ENCODE measurements at regions of chr6 and their contacts with region 1.

Region 1: GRCh38 chr6:53725791-53726431 is 60.4 kb upstream of the KLHL31 start:
- DNase-seq: no peak
- ATAC-seq: peak; percentile 91
- H3K4me3 ChIP-seq: no peak overlapping the region
- H3K27ac ChIP-seq: no peak overlapping the region
- H3K4me1 ChIP-seq: peaks cover 12 to 18% of the 10 kb centered on the region in 2 experiments
- H3K27me3 ChIP-seq: no peaks in the 10 kb centered on the region
- CTCF ChIP-seq: peak; percentile 78 to 97 (median 94); a peak in 5 of 6 replicates
- POLR2A ChIP-seq: no peak
- RAD21 ChIP-seq: peak; percentile 86

Region 2: DNA sequence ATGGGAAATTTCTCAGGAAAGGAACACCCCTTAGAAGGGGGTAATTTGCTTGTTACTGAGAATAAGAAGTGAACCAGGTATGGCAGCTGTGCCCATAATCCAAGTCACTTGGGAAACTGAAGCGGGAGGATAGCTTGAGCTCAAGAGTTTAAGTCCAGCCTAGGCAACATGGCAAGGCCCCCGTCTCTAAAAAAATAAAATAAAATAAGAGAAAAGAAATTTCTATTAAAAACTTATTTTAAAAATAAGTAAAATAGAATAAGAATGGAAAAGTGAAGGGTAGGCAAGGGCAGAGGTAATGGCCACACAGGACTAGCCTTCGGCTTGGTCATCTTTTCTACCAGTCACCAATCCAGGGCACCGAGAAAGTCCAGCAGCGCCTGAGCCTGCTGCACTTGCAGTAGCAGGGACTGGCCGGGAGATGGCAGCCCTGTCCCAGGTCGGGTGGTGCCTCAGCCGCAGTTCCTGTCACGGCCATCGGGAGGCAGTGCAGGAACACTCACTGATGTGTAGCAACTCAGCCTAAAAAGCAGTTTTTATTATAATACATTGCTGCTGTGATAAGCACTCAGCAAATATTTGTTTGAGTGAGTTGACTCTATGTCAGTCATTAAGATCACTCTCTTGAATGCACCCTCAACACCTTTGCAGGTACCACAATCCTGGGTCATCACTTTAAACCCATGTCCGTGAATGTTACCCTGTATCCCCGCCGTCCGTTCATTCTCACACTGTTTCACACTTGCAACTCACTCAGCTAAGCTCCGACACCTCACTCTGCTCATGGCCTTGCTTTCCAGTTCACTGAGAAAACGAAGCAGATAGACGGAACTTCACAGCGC is 554.1 kb before region 1 on chr6:
- CTCF ChIA-PET with region 1: interaction called, 4 read pairs
- POLR2A ChIA-PET with region 1: no interaction called
- RAD21 ChIA-PET with region 1: no interaction called
- intact Hi-C with region 1: loop called (anchors 5 kb)
- DNase-seq: peak; percentile 58
- ATAC-seq: peak; percentile 91
- H3K4me3 ChIP-seq: no peak overlapping the region
- H3K27ac ChIP-seq: no peak overlapping the region
- H3K4me1 ChIP-seq: peaks cover 0 to 10% of the 10 kb centered on the region in 2 experiments; a peak in 1 of 4 replicates
- H3K27me3 ChIP-seq: no peaks in the 10 kb centered on the region
- CTCF ChIP-seq: peak; percentile 100
- POLR2A ChIP-seq: no peak
- RAD21 ChIP-seq: peak; percentile 100

Region 3: GRCh38 chr6:53544470-53545308 is 181.2 kb before region 1 on chr6 and contains the start of gene GCLC:
- CTCF ChIA-PET with region 1: interaction called, 5 read pairs
- POLR2A ChIA-PET with region 1: interaction called, 3 read pairs
- RAD21 ChIA-PET with region 1: no interaction called
- intact Hi-C with region 1: loop called (anchors 2 kb)
- DNase-seq: peak; percentile 93
- ATAC-seq: peak; percentile 69
- H3K4me3 ChIP-seq: peak within 1 kb of the TSS; percentile 71 to 91
- H3K27ac ChIP-seq: peak within 1 kb of the TSS; percentile 88
- H3K4me1 ChIP-seq: peaks cover 6 to 43% of the 10 kb centered on the region in 2 experiments; a peak in 3 of 4 replicates
- H3K27me3 ChIP-seq: no peaks in the 10 kb centered on the region
- CTCF ChIP-seq: peak; percentile 41 to 49 (median 41)
- POLR2A ChIP-seq: peak; percentile 80
- RAD21 ChIP-seq: peak; percentile 73
- total RNA-seq, gene GCLC: 72.0 TPM

Region 4: GRCh38 chr6:53651764-53652401 is 74.0 kb before region 1 on chr6:
- CTCF ChIA-PET with region 1: interaction called, 3 read pairs
- POLR2A ChIA-PET with region 1: interaction called, 3 read pairs
- RAD21 ChIA-PET with region 1: interaction called in 1 of 2 experiments, 3 read pairs
- intact Hi-C with region 1: loop called (anchors 1 kb)
- DNase-seq: peak; percentile 88
- ATAC-seq: peak; percentile 93
- H3K4me3 ChIP-seq: peak overlapping the region; percentile 50 to 58
- H3K27ac ChIP-seq: peak overlapping the region; percentile 89
- H3K4me1 ChIP-seq: peaks cover 4 to 31% of the 10 kb centered on the region in 2 experiments; a peak in 3 of 4 replicates
- H3K27me3 ChIP-seq: no peaks in the 10 kb centered on the region
- CTCF ChIP-seq: peak in 2 of 3 experiments; percentile 13 to 33; a peak in 2 of 6 replicates
- POLR2A ChIP-seq: peak; percentile 56
- RAD21 ChIP-seq: peak; percentile 48

Region 5: GRCh38 chr6:53794720-53795253 is 68.9 kb after region 1 on chr6 and contains the start of gene LRRC1:
- CTCF ChIA-PET with region 1: interaction called, 10 read pairs
- POLR2A ChIA-PET with region 1: interaction called, 4 read pairs
- RAD21 ChIA-PET with region 1: interaction called, 3 to 4 read pairs
- intact Hi-C with region 1: no loop called
- DNase-seq: peak; percentile 86
- ATAC-seq: peak; percentile 71
- H3K4me3 ChIP-seq: peak within 1 kb of the TSS; percentile 65 to 75
- H3K27ac ChIP-seq: peak within 1 kb of the TSS; percentile 92
- H3K4me1 ChIP-seq: peaks cover 19 to 40% of the 10 kb centered on the region in 2 experiments
- H3K27me3 ChIP-seq: no peaks in the 10 kb centered on the region
- CTCF ChIP-seq: no peak
- POLR2A ChIP-seq: peak; percentile 20
- RAD21 ChIP-seq: no peak
- total RNA-seq, gene LRRC1: 19.8 TPM

Region 6: DNA sequence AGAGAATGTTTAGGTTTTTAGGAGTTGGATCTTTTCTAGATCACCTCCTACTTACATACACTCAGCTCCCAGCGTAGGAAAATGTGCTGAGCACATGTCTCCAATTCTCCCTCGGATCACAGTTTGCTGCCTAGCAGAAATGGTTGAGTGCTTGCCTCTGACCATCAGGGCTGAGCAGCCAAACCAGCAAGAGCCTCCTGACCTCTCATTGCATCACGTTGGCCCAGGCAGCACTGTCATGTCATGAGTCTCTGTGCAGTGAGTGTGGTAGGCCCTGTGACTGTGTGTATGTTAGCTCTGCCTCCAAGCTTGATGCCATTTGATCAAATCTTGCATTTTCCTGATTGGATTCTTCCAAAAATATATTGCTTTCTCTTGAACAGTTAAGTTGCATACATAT is 180.9 kb after region 1 on chr6:
- CTCF ChIA-PET with region 1: no interaction called
- POLR2A ChIA-PET with region 1: no interaction called
- RAD21 ChIA-PET with region 1: no interaction called
- intact Hi-C with region 1: no loop called
- DNase-seq: no peak
- ATAC-seq: no peak
- H3K4me3 ChIP-seq: no peak overlapping the region
- H3K27ac ChIP-seq: no peak overlapping the region
- H3K4me1 ChIP-seq: no peaks in the 10 kb centered on the region
- H3K27me3 ChIP-seq: no peaks in the 10 kb centered on the region
- CTCF ChIP-seq: no peak
- POLR2A ChIP-seq: no peak
- RAD21 ChIP-seq: no peak

Region 7: DNA sequence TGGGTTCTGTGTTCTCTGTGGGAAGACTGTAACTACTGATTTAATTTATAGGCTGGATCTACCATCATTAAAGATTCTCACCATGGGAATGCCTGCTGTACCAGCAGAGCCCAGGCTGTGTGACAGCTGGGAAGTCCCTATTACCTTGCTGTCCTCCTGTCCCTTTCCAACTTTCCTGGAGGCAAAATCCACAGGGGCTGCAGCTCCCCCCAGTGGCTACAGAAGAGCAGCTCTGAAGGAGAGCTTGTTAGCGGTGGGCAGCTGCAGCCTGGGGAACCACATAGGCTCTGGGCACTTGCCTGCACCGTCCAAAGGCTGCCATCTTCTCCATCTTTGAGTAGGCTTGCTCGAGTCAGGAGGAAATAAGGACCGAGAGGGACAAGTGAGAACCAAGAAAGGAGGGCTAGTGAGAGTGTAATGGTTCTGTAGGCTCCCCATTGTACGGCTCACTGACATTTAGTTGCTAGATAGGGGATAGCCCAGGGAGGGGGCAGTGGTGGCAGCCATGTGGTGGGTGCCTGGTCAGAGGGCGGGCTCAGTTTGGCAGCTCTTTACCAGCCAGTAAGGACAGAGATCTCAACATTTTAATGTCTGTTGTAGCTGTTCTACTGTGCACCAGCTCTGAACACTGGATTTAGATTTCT is 230.3 kb after region 1 on chr6:
- CTCF ChIA-PET with region 1: interaction called, 29 read pairs
- POLR2A ChIA-PET with region 1: no interaction called
- RAD21 ChIA-PET with region 1: interaction called in 1 of 2 experiments, 3 read pairs
- intact Hi-C with region 1: loop called (anchors 1 kb)
- DNase-seq: peak; percentile 72
- ATAC-seq: peak; percentile 99
- H3K4me3 ChIP-seq: no peak overlapping the region
- H3K27ac ChIP-seq: no peak overlapping the region
- H3K4me1 ChIP-seq: peaks cover 0 to 8% of the 10 kb centered on the region in 2 experiments; a peak in 1 of 4 replicates
- H3K27me3 ChIP-seq: no peaks in the 10 kb centered on the region
- CTCF ChIP-seq: peak; percentile 78 to 85 (median 82)
- POLR2A ChIP-seq: no peak
- RAD21 ChIP-seq: peak; percentile 90

Region 8: DNA sequence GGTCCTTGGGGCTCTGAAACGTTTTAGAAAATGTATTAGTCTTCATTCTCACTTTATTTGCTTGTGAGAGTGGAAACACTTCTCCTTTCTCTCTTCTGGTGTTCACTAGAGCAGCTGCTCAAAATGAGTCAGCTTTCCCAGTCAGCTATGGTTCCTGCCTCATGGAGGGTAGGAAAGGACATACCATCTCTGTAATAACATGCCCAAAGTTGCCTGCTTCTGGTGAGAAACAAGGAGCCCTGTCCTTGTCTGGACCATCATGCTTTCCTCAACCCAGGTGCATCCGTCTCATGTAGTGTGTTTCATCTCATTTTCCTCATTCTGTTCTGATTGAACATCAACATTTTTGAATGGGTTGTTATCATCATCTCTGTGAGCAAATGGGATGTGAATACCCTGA is 565.2 kb after region 1 on chr6:
- CTCF ChIA-PET with region 1: no interaction called
- POLR2A ChIA-PET with region 1: no interaction called
- RAD21 ChIA-PET with region 1: no interaction called
- intact Hi-C with region 1: no loop called
- DNase-seq: no peak
- ATAC-seq: no peak
- H3K4me3 ChIP-seq: no peak overlapping the region
- H3K27ac ChIP-seq: no peak overlapping the region
- H3K4me1 ChIP-seq: peaks cover 0 to 11% of the 10 kb centered on the region in 2 experiments; a peak in 2 of 4 replicates
- H3K27me3 ChIP-seq: no peaks in the 10 kb centered on the region
- CTCF ChIP-seq: no peak
- POLR2A ChIP-seq: no peak
- RAD21 ChIP-seq: no peak